Activated naive CD4-positive, alpha-beta T cell treated with anti-CD3 and anti-CD28 coated beads for 36 hours (primary cell): ENCODE measurements at regions of chr4 and their contacts with region 1.

Region 1: GRCh38 chr4:242121-242848 is 63.0 kb downstream of the ZNF732 start:
- DNase-seq: peak; percentile 79
- H3K4me3 Mint-ChIP-seq: peak overlapping the region; percentile 79
- H3K27ac Mint-ChIP-seq: peak overlapping the region; percentile 55
- H3K4me1 Mint-ChIP-seq: peaks cover 7% of the 10 kb centered on the region
- H3K27me3 Mint-ChIP-seq: no peaks in the 10 kb centered on the region

Region 2: DNA sequence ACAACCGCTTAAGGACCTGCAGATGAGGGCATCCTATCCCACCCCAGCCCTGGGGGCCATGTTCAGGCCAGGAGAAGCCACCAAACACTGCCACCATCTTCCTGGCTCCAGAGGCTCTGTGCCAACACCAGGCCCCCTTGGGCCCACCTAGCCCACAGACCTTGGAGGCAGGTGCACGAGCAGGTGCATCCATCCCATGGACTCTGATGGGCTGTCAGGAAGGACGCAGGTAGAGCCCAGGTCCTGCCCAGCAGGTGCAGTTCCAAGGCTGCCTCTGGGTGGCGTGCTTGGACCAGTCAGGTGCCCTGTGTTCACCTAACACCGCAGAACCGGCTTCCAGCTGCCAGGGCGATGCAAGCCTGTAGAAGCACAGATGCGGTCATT is 360.3 kb after region 1 on chr4:
- CTCF ChIA-PET with region 1: no interaction called
- intact Hi-C with region 1: loop called (anchors 10 kb)
- DNase-seq: peak; percentile 86
- H3K4me3 Mint-ChIP-seq: no peak overlapping the region
- H3K27ac Mint-ChIP-seq: no peak overlapping the region
- H3K4me1 Mint-ChIP-seq: peaks cover 2% of the 10 kb centered on the region
- H3K27me3 Mint-ChIP-seq: peaks cover 12% of the 10 kb centered on the region

Region 3: GRCh38 chr4:997375-998071 is 755.2 kb after region 1 on chr4:
- CTCF ChIA-PET with region 1: no interaction called
- intact Hi-C with region 1: loop called (anchors 5 kb)
- DNase-seq: no peak
- H3K4me3 Mint-ChIP-seq: no peak overlapping the region
- H3K27ac Mint-ChIP-seq: no peak overlapping the region
- H3K4me1 Mint-ChIP-seq: peaks cover 11% of the 10 kb centered on the region
- H3K27me3 Mint-ChIP-seq: peaks cover 32% of the 10 kb centered on the region